Caco-2 (cell line): ENCODE measurements at regions of chr1 and their contacts with region 1.

Region 1: GRCh38 chr1:48572646-48573261 is 100.8 kb upstream of the SPATA6 start:
- DNase-seq: peak; percentile 65
- H3K4me3 ChIP-seq: no peak overlapping the region
- H3K4me3 Mint-ChIP-seq: no peak overlapping the region
- H3K27ac Mint-ChIP-seq: no peak overlapping the region
- H3K4me1 ChIP-seq: no peaks in the 10 kb centered on the region
- H3K4me1 Mint-ChIP-seq: no peaks in the 10 kb centered on the region
- H3K27me3 ChIP-seq: no peaks in the 10 kb centered on the region; the same call in none of the 2 replicates
- H3K27me3 Mint-ChIP-seq: peaks cover 13% of the 10 kb centered on the region
- CTCF ChIP-seq: peak; percentile 58 to 81

Region 2: GRCh38 chr1:48677306-48678287 is 104.8 kb after region 1 on chr1:
- CTCF ChIA-PET with region 1: interaction called, 13 read pairs
- POLR2A ChIA-PET with region 1: no interaction called
- intact Hi-C with region 1: loop called (anchors 1 kb)
- DNase-seq: peak; percentile 44 to 58
- H3K4me3 ChIP-seq: no peak overlapping the region
- H3K4me3 Mint-ChIP-seq: no peak overlapping the region
- H3K27ac Mint-ChIP-seq: no peak overlapping the region
- H3K4me1 ChIP-seq: no peaks in the 10 kb centered on the region
- H3K4me1 Mint-ChIP-seq: no peaks in the 10 kb centered on the region
- H3K27me3 ChIP-seq: no peaks in the 10 kb centered on the region
- H3K27me3 Mint-ChIP-seq: no peaks in the 10 kb centered on the region
- CTCF ChIP-seq: peak; percentile 63 to 66

Region 3: GRCh38 chr1:48697066-48697707 is 124.4 kb after region 1 on chr1:
- CTCF ChIA-PET with region 1: no interaction called
- POLR2A ChIA-PET with region 1: no interaction called
- intact Hi-C with region 1: loop called (anchors 1 kb)
- DNase-seq: peak; percentile 42 to 64
- H3K4me3 ChIP-seq: no peak overlapping the region
- H3K4me3 Mint-ChIP-seq: no peak overlapping the region
- H3K27ac Mint-ChIP-seq: no peak overlapping the region
- H3K4me1 ChIP-seq: no peaks in the 10 kb centered on the region
- H3K4me1 Mint-ChIP-seq: no peaks in the 10 kb centered on the region
- H3K27me3 ChIP-seq: no peaks in the 10 kb centered on the region
- H3K27me3 Mint-ChIP-seq: peaks cover 11% of the 10 kb centered on the region
- CTCF ChIP-seq: peak; percentile 72 to 78

Region 4: DNA sequence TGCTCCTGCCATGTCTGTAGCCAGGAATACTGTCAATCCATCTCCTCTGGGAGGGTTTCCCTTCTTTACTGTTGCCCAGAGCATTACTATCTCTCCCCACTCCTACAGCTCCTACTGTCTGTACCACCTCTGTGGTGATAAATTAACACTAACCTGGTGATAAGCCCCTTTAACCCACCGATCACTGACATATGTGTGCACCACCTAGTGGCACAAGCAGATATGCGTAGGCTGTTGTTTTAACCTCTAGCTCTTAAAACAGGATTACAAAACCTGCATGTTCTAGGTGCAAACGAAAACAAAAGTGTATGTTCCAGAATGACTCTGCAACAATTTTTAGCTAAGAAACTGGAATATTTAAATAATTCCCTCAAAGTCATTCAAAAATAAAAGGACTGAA is 297.8 kb after region 1 on chr1:
- CTCF ChIA-PET with region 1: interaction called, 4 read pairs
- POLR2A ChIA-PET with region 1: no interaction called
- intact Hi-C with region 1: loop called (anchors 1 kb)
- DNase-seq: peak in 1 of 2 experiments; percentile 10
- H3K4me3 ChIP-seq: no peak overlapping the region
- H3K4me3 Mint-ChIP-seq: no peak overlapping the region
- H3K27ac Mint-ChIP-seq: no peak overlapping the region
- H3K4me1 ChIP-seq: no peaks in the 10 kb centered on the region
- H3K4me1 Mint-ChIP-seq: no peaks in the 10 kb centered on the region
- H3K27me3 ChIP-seq: no peaks in the 10 kb centered on the region
- H3K27me3 Mint-ChIP-seq: peaks cover 4% of the 10 kb centered on the region
- CTCF ChIP-seq: peak; percentile 29 to 67

Region 5: DNA sequence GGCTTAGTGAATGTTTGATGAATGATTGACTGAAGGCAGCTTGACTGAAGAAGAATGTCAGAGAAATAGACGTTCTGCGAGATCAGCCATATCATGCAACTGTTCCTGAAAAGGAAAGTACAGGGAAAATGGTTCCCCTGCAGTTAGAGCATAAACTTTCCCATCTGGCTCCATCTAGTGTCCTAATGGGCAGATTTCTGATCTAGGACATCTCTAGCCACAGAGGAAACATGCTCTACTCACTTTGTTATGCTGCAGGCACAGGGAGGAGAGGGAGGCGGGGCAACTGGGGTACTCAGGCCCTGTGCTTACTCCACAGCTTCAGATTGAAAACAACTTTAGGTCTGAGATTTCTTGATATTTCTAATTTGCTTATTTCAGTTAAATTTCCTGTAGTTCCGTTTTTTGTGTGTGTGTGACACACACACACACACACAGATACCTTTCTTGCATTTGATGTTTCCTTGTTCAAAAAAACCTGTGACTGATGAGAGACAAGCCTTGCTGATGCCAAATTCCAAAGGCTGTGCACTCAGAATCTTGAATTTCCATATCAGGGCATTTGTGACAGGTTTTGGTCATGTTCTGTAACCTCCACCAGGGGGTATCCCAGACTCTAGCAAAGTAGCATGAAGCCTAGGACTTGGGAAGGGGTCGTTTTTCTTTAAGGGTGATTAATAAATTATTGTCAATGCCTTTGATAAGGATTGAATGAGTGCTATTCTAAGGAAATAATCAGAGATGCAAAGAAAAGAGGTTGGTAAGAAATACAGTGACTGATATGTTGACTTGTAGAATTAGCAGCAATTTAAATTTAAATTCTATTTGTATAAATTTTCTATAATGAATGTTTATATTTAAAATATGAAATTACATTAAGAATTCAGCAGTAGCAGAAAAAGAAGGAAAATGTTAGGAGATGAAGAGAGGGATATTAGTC is 343.6 kb after region 1 on chr1:
- CTCF ChIA-PET with region 1: interaction called, 3 read pairs
- POLR2A ChIA-PET with region 1: no interaction called
- intact Hi-C with region 1: loop called (anchors 1 kb)
- DNase-seq: peak; percentile 37 to 43
- H3K4me3 ChIP-seq: no peak overlapping the region
- H3K4me3 Mint-ChIP-seq: no peak overlapping the region
- H3K27ac Mint-ChIP-seq: peak overlapping the region; percentile 53
- H3K4me1 ChIP-seq: peaks cover 6% of the 10 kb centered on the region; the same call in 1 of the 2 replicates
- H3K4me1 Mint-ChIP-seq: no peaks in the 10 kb centered on the region
- H3K27me3 ChIP-seq: no peaks in the 10 kb centered on the region
- H3K27me3 Mint-ChIP-seq: no peaks in the 10 kb centered on the region
- CTCF ChIP-seq: peak in 1 of 2 experiments; percentile 59